H1 (cell line): ENCODE measurements at regions of chr3 and their contacts with region 1.

Region 1: GRCh38 chr3:12484198-12484974 is at the start of gene TSEN2:
- DNase-seq: peak; percentile 89 to 98
- H3K4me3 ChIP-seq: peak within 1 kb of the TSS; percentile 68 to 86 (median 83)
- H3K27ac ChIP-seq: peak within 1 kb of the TSS; percentile 75
- H3K4me1 ChIP-seq: peaks cover 2 to 8% (median 5%) of the 10 kb centered on the region in 4 experiments
- H3K27me3 ChIP-seq: no peaks in the 10 kb centered on the region
- CTCF ChIP-seq: peak in 1 of 3 experiments; percentile 14; a peak in 1 of 4 replicates
- EP300 ChIP-seq: no peak
- POLR2A ChIP-seq: peak; percentile 87 to 88; a peak in 2 of 3 replicates
- RAD21 ChIP-seq: 0 out of 4 replicates have a peak, but pooled peaks of 1 of the 2 experiments have one; percentile 6
- total RNA-seq, gene TSEN2: 22.4 and 22.6 TPM in 2 replicates

Region 2: GRCh38 chr3:12135029-12135657 is 349.2 kb before region 1 on chr3:
- CTCF ChIA-PET with region 1: interaction called, 25 read pairs
- POLR2A ChIA-PET with region 1: no interaction called
- DNase-seq: peak; percentile 17 to 78
- H3K4me3 ChIP-seq: no peak overlapping the region
- H3K27ac ChIP-seq: no peak overlapping the region
- H3K4me1 ChIP-seq: no peaks in the 10 kb centered on the region
- H3K27me3 ChIP-seq: no peaks in the 10 kb centered on the region
- CTCF ChIP-seq: peak; percentile 86 to 92 (median 90)
- EP300 ChIP-seq: no peak
- POLR2A ChIP-seq: no peak
- RAD21 ChIP-seq: peak; percentile 87 to 92

Region 3: DNA sequence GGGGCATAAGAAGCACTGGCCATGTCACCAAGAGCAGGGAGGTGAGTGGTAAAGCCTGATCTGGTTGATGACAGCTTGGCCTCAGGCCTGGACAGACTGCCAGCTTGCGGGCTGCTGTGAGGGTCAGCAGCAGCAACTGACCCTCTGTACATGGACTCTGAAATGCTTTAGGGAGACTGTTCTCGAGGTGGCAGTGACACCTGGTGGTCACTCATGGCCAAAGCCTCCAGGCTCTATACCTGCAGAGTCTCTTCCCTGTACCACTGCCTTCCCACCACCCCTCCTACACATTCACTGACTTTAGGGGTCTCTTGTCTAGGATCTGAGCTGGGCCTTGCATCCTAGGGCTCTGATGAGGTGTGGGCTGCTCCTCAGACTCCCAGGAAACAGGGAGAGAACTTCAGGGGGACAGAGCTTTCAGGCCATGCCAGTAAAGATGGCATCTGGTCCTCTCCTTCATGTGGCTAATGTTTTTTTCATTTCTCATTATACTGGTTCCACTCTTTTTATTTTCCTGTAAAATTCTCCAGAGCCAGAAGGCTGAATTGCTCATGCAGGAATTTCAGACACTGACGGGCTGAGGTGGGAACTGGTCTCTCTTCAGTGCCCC is 308.4 kb before region 1 on chr3:
- CTCF ChIA-PET with region 1: interaction called, 36 read pairs
- POLR2A ChIA-PET with region 1: no interaction called
- DNase-seq: peak in 1 of 2 experiments; percentile 78
- H3K4me3 ChIP-seq: no peak overlapping the region
- H3K27ac ChIP-seq: no peak overlapping the region
- H3K4me1 ChIP-seq: no peaks in the 10 kb centered on the region
- H3K27me3 ChIP-seq: no peaks in the 10 kb centered on the region
- CTCF ChIP-seq: peak; percentile 88 to 91 (median 91)
- EP300 ChIP-seq: no peak
- POLR2A ChIP-seq: no peak
- RAD21 ChIP-seq: peak; percentile 94 to 96

Region 4: DNA sequence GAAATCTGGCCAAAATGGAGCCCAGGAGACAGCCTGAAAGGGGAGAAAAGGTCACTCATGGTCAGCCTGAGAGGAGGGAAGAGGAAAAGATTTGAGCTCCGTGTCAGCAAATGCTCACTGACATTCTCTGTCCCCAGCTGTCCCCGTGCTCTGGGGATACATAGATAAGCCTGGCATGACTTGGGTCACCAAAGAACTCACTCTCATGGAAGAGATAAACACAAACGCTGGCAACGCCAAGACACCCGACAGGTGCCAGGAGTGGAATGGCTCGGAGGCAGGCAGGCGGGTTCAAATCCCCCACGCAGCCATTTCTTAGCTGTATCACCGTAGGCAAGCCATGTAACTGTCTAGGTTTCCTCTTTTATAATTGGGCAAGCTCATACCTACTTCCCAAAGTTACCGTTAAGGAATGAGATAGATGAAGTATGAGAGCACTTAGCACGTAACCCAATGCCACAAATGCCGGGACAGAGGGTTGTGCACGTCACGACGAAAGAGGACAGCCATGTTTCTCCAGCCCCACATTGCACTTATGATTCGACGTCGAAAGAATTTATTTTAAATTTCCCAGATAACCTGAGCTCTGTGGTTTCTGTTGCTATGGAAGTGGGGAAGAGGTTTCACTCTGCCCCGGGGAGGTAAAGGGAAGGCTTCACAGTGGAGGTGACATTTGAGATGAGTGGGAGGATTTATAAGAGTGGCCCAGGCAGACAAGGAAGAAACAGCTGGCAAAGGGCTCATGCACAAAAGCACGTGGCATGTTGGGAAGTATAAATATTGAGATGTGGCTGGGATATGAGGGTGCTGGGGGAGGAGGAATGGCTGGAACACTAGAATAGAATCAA is 41.5 kb before region 1 on chr3:
- CTCF ChIA-PET with region 1: interaction called, 11 read pairs
- POLR2A ChIA-PET with region 1: no interaction called
- DNase-seq: no peak
- H3K4me3 ChIP-seq: no peak overlapping the region
- H3K27ac ChIP-seq: no peak overlapping the region
- H3K4me1 ChIP-seq: peaks cover 0 to 16% (median 6%) of the 10 kb centered on the region in 4 experiments; a peak in 5 of 7 replicates
- H3K27me3 ChIP-seq: peaks cover 0 to 2% (median 0%) of the 10 kb centered on the region in 4 experiments; a peak in 3 of 7 replicates
- CTCF ChIP-seq: no peak
- EP300 ChIP-seq: no peak
- POLR2A ChIP-seq: no peak
- RAD21 ChIP-seq: no peak

Region 5: GRCh38 chr3:12495749-12496452 is 11.5 kb after region 1 on chr3:
- CTCF ChIA-PET with region 1: interaction called, 23 read pairs
- POLR2A ChIA-PET with region 1: interaction called, 18 read pairs
- DNase-seq: no peak
- H3K4me3 ChIP-seq: no peak overlapping the region
- H3K27ac ChIP-seq: no peak overlapping the region
- H3K4me1 ChIP-seq: no peaks in the 10 kb centered on the region
- H3K27me3 ChIP-seq: no peaks in the 10 kb centered on the region
- CTCF ChIP-seq: peak; percentile 44 to 69 (median 61)
- EP300 ChIP-seq: no peak
- POLR2A ChIP-seq: no peak
- RAD21 ChIP-seq: peak; percentile 19 to 37; a peak in 2 of 4 replicates

Region 6: DNA sequence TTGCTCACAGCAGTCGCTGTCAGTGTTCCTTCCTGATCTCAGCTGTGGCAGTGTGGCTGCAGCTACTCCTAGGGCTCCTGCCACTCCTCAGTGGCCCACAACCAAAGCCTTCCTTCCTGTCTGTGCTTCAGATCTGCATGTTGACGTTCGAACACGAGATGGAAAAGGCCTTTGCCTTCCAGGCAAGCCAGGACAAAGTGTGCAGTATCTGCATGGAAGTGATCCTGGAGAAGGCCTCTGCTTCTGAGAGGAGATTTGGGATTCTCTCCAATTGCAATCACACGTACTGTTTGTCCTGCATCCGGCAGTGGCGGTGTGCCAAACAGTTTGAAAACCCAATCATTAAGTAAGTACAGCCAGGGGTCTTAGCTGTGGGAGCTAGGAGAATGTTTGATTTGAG is 90.3 kb after region 1 on chr3:
- CTCF ChIA-PET with region 1: no interaction called
- POLR2A ChIA-PET with region 1: no interaction called
- DNase-seq: no peak
- H3K4me3 ChIP-seq: no peak overlapping the region
- H3K27ac ChIP-seq: no peak overlapping the region
- H3K4me1 ChIP-seq: no peaks in the 10 kb centered on the region
- H3K27me3 ChIP-seq: no peaks in the 10 kb centered on the region
- CTCF ChIP-seq: no peak
- EP300 ChIP-seq: no peak
- POLR2A ChIP-seq: no peak
- RAD21 ChIP-seq: no peak